Adrenal gland (tissue), 19 donors: ENCODE measurements at regions of chr5 and their contacts with region 1.

Region 1: DNA sequence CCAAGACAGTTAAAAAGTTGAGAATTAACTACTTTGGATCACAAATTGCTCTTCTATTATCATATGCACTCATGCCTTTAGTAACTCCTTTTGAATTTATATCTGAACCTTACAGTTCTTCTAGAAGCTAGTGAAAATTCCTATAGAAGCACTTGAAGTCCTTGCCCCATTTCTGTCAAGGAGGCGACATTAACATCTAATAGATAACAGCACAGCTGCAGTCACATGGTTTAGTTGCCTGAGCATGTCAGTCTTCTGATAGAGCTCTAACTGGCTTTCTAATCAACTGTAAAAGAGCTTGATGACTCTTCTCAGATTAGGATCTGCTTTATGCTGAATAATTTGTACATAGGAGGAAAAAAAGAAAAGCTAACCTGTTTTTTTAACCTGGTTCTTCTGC is 9.0 kb downstream of the RFESD start:
- DNase-seq: no peak
- H3K4me3 ChIP-seq: no peak overlapping the region
- H3K27ac ChIP-seq: no peak overlapping the region
- H3K4me1 ChIP-seq: peaks cover 0 to 7% of the 10 kb centered on the region in 2 donors
- H3K27me3 ChIP-seq: no peaks in the 10 kb centered on the region
- CTCF ChIP-seq: no peak
- POLR2A ChIP-seq: no peak

Region 2: DNA sequence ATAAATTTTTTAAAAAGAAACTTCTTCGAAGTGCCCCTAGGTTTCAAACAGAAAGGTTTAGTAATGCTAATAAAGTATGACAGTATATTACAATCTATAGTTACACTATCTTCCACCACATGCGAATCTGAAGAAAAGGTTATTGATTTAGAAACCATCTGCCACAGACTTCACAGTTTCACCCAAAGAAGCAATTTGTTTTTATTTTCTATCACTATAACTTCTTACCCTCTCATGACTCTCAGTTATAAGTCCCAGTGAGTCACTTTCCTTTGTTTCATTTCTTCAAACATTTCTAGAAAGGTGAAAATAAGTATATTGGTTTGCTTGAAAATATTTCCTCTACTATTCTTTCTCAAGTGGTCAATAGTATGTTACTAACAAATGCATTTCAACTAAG is 464.2 kb before region 1 on chr5:
- intact Hi-C with region 1: no loop called
- DNase-seq: no peak
- H3K4me3 ChIP-seq: no peak overlapping the region
- H3K27ac ChIP-seq: no peak overlapping the region
- H3K4me1 ChIP-seq: no peaks in the 10 kb centered on the region
- H3K27me3 ChIP-seq: no peaks in the 10 kb centered on the region
- CTCF ChIP-seq: no peak
- POLR2A ChIP-seq: no peak

Region 3: GRCh38 chr5:95543017-95543705 is 112.4 kb before region 1 on chr5:
- intact Hi-C with region 1: no loop called
- DNase-seq: no peak
- H3K4me3 ChIP-seq: no peak overlapping the region
- H3K27ac ChIP-seq: no peak overlapping the region
- H3K4me1 ChIP-seq: peaks cover 0 to 5% of the 10 kb centered on the region in 2 donors
- H3K27me3 ChIP-seq: no peaks in the 10 kb centered on the region
- CTCF ChIP-seq: no peak
- POLR2A ChIP-seq: no peak

Region 4: GRCh38 chr5:95743232-95743631 is 87.7 kb after region 1 on chr5:
- intact Hi-C with region 1: no loop called
- DNase-seq: no peak
- H3K4me3 ChIP-seq: no peak overlapping the region
- H3K27ac ChIP-seq: no peak overlapping the region
- H3K4me1 ChIP-seq: peaks cover 0 to 11% of the 10 kb centered on the region in 2 donors
- H3K27me3 ChIP-seq: no peaks in the 10 kb centered on the region
- CTCF ChIP-seq: no peak
- POLR2A ChIP-seq: no peak

Region 5: DNA sequence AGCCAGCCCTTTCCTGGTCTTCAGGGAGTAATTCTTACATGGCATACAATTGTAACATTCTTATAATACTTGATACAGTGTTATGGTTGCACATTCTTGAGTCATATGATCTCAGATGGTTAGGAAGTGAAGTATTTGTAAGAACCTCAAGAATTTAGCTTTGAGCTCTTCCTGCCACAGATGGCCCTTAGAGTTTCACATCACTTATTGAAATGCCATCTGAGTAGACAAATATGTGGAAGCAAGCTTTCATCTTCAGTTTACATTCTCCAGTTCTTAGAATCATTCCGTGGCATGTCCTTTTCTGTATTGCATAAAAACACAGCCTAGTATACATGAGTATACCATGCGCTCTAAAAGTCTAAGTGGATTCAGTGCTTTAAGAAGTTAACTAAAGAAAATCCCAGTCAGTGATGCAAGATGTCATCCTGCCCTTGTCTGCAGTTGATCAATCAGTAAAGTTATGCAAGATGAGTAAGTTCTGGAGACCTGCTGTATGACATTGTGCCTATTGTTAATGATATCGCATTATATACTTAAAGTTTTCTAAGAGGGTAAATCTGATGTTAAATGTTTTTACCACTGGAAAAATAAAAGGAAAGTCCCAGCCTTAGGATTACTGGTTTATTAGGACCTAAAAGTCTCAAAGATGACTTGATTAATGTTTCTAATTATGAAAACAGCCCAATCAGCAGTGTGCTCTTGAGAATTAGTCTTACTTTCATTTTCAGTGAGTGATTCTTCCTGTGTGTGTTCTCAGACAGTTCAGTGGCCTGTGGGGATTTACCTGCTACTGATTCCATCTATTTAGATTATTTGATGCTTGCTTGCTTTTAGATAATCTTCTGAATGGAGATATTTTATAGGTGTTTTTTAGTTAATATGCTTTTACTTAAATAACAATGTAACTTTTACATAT is 105.0 kb after region 1 on chr5:
- intact Hi-C with region 1: loop called (anchors 10 kb)
- DNase-seq: no peak
- H3K4me3 ChIP-seq: no peak overlapping the region
- H3K27ac ChIP-seq: peak overlapping the region in 4 of 5 donors; percentile 11 to 71 (median 54)
- H3K4me1 ChIP-seq: peaks cover 0 to 41% of the 10 kb centered on the region in 2 donors
- H3K27me3 ChIP-seq: no peaks in the 10 kb centered on the region
- CTCF ChIP-seq: no peak
- POLR2A ChIP-seq: no peak

Region 6: GRCh38 chr5:96157841-96158291 is 502.3 kb after region 1 on chr5:
- intact Hi-C with region 1: no loop called
- DNase-seq: no peak
- H3K4me3 ChIP-seq: no peak overlapping the region
- H3K27ac ChIP-seq: no peak overlapping the region
- H3K4me1 ChIP-seq: no peaks in the 10 kb centered on the region
- H3K27me3 ChIP-seq: no peaks in the 10 kb centered on the region
- CTCF ChIP-seq: no peak
- POLR2A ChIP-seq: no peak